ENCODE measurements at regions of chr14 and their contacts with region 1.

Region 1: DNA sequence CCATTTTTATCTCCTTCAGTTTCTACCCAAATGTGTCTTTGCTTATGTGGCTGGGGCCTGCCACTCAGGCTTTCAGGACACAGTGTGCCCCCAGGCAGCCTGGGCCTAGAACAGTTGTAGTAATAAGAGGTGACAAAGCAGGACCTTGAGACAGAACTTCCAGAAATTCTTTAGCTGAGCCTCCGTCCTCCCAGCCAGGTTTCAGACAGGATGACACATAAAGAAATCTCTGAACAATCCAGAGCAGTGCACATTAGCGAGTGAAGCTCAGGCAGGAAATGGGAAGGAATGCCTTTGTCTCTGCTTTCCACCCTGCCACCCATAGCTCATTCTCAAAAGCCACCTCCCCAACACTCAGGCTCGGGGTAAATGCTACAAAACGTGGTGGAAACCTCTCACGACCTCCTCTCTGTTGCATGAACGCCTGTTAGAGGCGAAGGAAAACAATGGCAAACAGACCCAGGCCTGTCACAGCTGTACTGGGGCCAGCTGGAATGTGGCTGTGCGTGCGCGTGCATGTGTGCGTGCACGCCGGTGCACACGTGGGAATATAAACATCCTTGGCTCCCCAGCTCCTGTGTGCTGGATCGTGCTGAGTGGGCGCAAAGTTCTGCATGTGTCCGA is 286.7 kb downstream of the ZFP36L1 start:
- DNase-seq: peak in 2 of 14 experiments; percentile 25 to 45
- ATAC-seq: no peak
- H3K4me3 ChIP-seq: peak overlapping the region; percentile 20
- H3K4me3 Mint-ChIP-seq: peak overlapping the region; percentile 50
- H3K27ac ChIP-seq: peak overlapping the region; percentile 64 to 90
- H3K27ac Mint-ChIP-seq: peak overlapping the region; percentile 95
- H3K4me1 ChIP-seq: peaks cover 64% of the 10 kb centered on the region
- H3K4me1 Mint-ChIP-seq: peaks cover 82% of the 10 kb centered on the region
- H3K27me3 ChIP-seq: no peaks in the 10 kb centered on the region
- H3K27me3 Mint-ChIP-seq: no peaks in the 10 kb centered on the region
- CTCF ChIP-seq: no peak

Region 2: DNA sequence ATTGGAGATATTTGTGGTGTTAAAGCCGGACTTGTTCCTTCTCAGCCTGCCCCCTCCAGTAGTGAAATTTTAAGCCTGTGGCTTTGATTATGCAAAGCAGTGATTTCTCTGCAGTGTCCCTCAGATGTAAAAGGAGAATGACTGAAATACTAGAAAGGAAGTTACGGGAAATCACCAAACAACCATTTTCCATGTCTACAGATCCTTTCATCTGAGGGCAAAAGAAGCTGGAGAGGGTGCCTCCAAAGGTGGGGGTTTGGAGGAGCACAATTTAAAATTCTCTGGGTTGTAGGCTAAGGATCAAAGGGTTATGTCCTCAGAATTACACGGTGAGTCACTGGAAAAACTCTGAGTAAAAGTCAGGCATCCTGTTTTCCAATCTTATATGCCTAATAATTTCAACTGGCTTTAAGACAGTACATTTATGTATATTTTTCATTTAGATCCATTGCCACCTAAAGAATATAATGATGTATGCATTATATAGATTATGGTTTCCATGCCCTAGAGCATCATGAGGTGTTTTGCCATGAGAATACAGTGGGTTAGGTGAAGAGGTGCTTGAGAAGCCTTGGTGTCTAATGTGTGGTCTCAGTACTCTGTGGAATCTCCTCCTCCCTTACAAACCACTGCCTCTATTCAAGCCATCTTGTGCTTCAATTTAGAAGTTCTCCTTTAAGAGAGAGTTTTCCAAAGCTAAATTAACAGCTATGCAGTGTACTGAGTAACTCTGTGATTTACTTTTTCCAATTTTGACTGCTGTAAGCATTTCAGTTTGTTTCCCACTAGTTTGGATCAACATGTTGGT is 324.4 kb before region 1 on chr14:
- CTCF ChIA-PET with region 1: no interaction called
- POLR2A ChIA-PET with region 1: no interaction called
- intact Hi-C with region 1: no loop called
- DNase-seq: no peak
- ATAC-seq: no peak
- H3K4me3 ChIP-seq: no peak overlapping the region
- H3K4me3 Mint-ChIP-seq: no peak overlapping the region
- H3K27ac ChIP-seq: no peak overlapping the region
- H3K27ac Mint-ChIP-seq: no peak overlapping the region
- H3K4me1 ChIP-seq: no peaks in the 10 kb centered on the region
- H3K4me1 Mint-ChIP-seq: peaks cover 31% of the 10 kb centered on the region
- H3K27me3 ChIP-seq: no peaks in the 10 kb centered on the region
- H3K27me3 Mint-ChIP-seq: no peaks in the 10 kb centered on the region
- CTCF ChIP-seq: no peak

Region 3: GRCh38 chr14:68283378-68284123 is 222.6 kb before region 1 on chr14:
- CTCF ChIA-PET with region 1: interaction called, 3 read pairs
- POLR2A ChIA-PET with region 1: interaction called, 25 read pairs
- intact Hi-C with region 1: loop called in 1 of 2 experiments (anchors 2 kb)
- DNase-seq: peak; percentile 47 to 86 (median 66)
- ATAC-seq: peak; percentile 73
- H3K4me3 ChIP-seq: no peak overlapping the region
- H3K4me3 Mint-ChIP-seq: peak overlapping the region; percentile 56
- H3K27ac ChIP-seq: peak overlapping the region; percentile 76 to 88
- H3K27ac Mint-ChIP-seq: peak overlapping the region; percentile 99
- H3K4me1 ChIP-seq: peaks cover 62% of the 10 kb centered on the region
- H3K4me1 Mint-ChIP-seq: peaks cover 94% of the 10 kb centered on the region
- H3K27me3 ChIP-seq: no peaks in the 10 kb centered on the region
- H3K27me3 Mint-ChIP-seq: no peaks in the 10 kb centered on the region
- CTCF ChIP-seq: peak; percentile 23

Region 4: DNA sequence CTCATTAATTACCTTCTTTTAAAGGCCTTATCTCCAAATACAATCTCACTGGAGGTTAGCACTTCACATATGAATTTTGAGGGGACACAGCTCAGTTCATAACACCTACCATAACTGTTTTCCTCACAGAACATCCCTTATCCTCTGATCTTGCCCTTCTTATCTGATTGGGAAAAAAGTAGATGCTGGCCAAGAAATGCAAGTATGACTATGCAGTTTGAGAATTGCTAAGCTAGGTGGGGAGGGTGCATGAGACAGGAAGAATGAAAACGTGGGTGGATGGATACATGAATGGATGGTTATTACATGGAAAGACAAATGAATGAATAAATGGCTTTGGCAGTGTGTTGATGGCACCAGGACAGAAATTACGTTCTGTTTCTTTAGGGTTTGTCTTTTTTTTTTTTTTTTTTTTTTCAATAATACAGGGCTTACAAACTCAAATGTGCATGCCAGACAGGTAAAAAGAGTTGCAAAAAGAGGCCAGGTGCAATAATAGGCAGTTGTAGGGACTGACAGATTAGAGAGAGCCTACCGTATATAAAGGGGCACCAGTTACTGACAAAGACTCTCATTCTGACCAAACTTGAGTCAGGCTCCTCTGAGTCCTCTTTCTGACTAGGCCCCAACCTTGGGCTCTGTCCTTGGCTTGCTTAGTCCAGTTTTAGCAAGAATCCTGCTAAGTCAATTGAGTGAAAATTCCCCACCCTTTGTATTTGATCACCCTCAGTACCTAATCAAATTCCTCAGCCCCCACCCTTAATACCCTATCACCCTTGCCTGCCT is 18.1 kb before region 1 on chr14:
- CTCF ChIA-PET with region 1: interaction called, 9 read pairs
- POLR2A ChIA-PET with region 1: interaction called, 52 read pairs
- intact Hi-C with region 1: loop called in 1 of 2 experiments (anchors 1 kb)
- DNase-seq: no peak
- ATAC-seq: no peak
- H3K4me3 ChIP-seq: no peak overlapping the region
- H3K4me3 Mint-ChIP-seq: no peak overlapping the region
- H3K27ac ChIP-seq: no peak overlapping the region
- H3K27ac Mint-ChIP-seq: peak overlapping the region; percentile 5
- H3K4me1 ChIP-seq: peaks cover 29% of the 10 kb centered on the region
- H3K4me1 Mint-ChIP-seq: peaks cover 62% of the 10 kb centered on the region
- H3K27me3 ChIP-seq: no peaks in the 10 kb centered on the region
- H3K27me3 Mint-ChIP-seq: no peaks in the 10 kb centered on the region
- CTCF ChIP-seq: no peak

Region 5: GRCh38 chr14:68520637-68521556 is 14.8 kb after region 1 on chr14:
- CTCF ChIA-PET with region 1: interaction called, 6 read pairs
- POLR2A ChIA-PET with region 1: interaction called, 38 read pairs
- intact Hi-C with region 1: no loop called
- DNase-seq: no peak
- ATAC-seq: no peak
- H3K4me3 ChIP-seq: no peak overlapping the region
- H3K4me3 Mint-ChIP-seq: no peak overlapping the region
- H3K27ac ChIP-seq: no peak overlapping the region
- H3K27ac Mint-ChIP-seq: no peak overlapping the region
- H3K4me1 ChIP-seq: peaks cover 5% of the 10 kb centered on the region
- H3K4me1 Mint-ChIP-seq: peaks cover 39% of the 10 kb centered on the region
- H3K27me3 ChIP-seq: no peaks in the 10 kb centered on the region
- H3K27me3 Mint-ChIP-seq: no peaks in the 10 kb centered on the region
- CTCF ChIP-seq: no peak

Region 6: GRCh38 chr14:68627880-68628607 is 121.9 kb after region 1 on chr14:
- CTCF ChIA-PET with region 1: no interaction called
- POLR2A ChIA-PET with region 1: interaction called, 14 read pairs
- intact Hi-C with region 1: no loop called
- DNase-seq: peak; percentile 24 to 83 (median 58)
- ATAC-seq: peak; percentile 64
- H3K4me3 ChIP-seq: peak overlapping the region; percentile 60
- H3K4me3 Mint-ChIP-seq: peak overlapping the region; percentile 90
- H3K27ac ChIP-seq: peak overlapping the region in 1 of 2 donors; percentile 62
- H3K27ac Mint-ChIP-seq: peak overlapping the region; percentile 89
- H3K4me1 ChIP-seq: peaks cover 15% of the 10 kb centered on the region
- H3K4me1 Mint-ChIP-seq: peaks cover 31% of the 10 kb centered on the region
- H3K27me3 ChIP-seq: no peaks in the 10 kb centered on the region
- H3K27me3 Mint-ChIP-seq: no peaks in the 10 kb centered on the region
- CTCF ChIP-seq: no peak

Region 7: GRCh38 chr14:68780358-68781160 is 274.4 kb after region 1 on chr14:
- CTCF ChIA-PET with region 1: interaction called, 5 read pairs
- POLR2A ChIA-PET with region 1: interaction called, 133 read pairs
- intact Hi-C with region 1: loop called in 1 of 2 experiments (anchors 5 kb)
- DNase-seq: peak in 9 of 14 experiments; percentile 27 to 77 (median 44)
- ATAC-seq: peak; percentile 36
- H3K4me3 ChIP-seq: peak overlapping the region; percentile 44
- H3K4me3 Mint-ChIP-seq: peak overlapping the region; percentile 79
- H3K27ac ChIP-seq: peak overlapping the region; percentile 56 to 58
- H3K27ac Mint-ChIP-seq: peak overlapping the region; percentile 92
- H3K4me1 ChIP-seq: peaks cover 81% of the 10 kb centered on the region
- H3K4me1 Mint-ChIP-seq: peaks cover 79% of the 10 kb centered on the region
- H3K27me3 ChIP-seq: no peaks in the 10 kb centered on the region
- H3K27me3 Mint-ChIP-seq: no peaks in the 10 kb centered on the region
- CTCF ChIP-seq: no peak

Region 8: GRCh38 chr14:68795597-68796417 is 289.7 kb after region 1 on chr14:
- CTCF ChIA-PET with region 1: interaction called, 9 read pairs
- POLR2A ChIA-PET with region 1: interaction called, 133 read pairs
- intact Hi-C with region 1: loop called in 1 of 2 experiments (anchors 2 kb)
- DNase-seq: peak; percentile 66 to 95 (median 80)
- ATAC-seq: peak; percentile 43
- H3K4me3 ChIP-seq: peak overlapping the region; percentile 98
- H3K4me3 Mint-ChIP-seq: peak overlapping the region; percentile 92
- H3K27ac ChIP-seq: peak overlapping the region; percentile 100
- H3K27ac Mint-ChIP-seq: peak overlapping the region; percentile 99
- H3K4me1 ChIP-seq: peaks cover 29% of the 10 kb centered on the region
- H3K4me1 Mint-ChIP-seq: peaks cover 49% of the 10 kb centered on the region
- H3K27me3 ChIP-seq: no peaks in the 10 kb centered on the region
- H3K27me3 Mint-ChIP-seq: no peaks in the 10 kb centered on the region
- CTCF ChIP-seq: peak; percentile 77